Activated T-helper 2 cell treated with anti-CD3 and anti-CD28 coated beads, Interferon-gamma antibody, Interleukin-2, Interleukin-4, amounts not matched to agents 10 μg/mL and 5 μg/mL and 100 μg/mL, durations not matched to agents 14 hours and 24 hours and 36 hours (primary cell): ENCODE measurements at regions of chr2 and their contacts with region 1.

Region 1: DNA sequence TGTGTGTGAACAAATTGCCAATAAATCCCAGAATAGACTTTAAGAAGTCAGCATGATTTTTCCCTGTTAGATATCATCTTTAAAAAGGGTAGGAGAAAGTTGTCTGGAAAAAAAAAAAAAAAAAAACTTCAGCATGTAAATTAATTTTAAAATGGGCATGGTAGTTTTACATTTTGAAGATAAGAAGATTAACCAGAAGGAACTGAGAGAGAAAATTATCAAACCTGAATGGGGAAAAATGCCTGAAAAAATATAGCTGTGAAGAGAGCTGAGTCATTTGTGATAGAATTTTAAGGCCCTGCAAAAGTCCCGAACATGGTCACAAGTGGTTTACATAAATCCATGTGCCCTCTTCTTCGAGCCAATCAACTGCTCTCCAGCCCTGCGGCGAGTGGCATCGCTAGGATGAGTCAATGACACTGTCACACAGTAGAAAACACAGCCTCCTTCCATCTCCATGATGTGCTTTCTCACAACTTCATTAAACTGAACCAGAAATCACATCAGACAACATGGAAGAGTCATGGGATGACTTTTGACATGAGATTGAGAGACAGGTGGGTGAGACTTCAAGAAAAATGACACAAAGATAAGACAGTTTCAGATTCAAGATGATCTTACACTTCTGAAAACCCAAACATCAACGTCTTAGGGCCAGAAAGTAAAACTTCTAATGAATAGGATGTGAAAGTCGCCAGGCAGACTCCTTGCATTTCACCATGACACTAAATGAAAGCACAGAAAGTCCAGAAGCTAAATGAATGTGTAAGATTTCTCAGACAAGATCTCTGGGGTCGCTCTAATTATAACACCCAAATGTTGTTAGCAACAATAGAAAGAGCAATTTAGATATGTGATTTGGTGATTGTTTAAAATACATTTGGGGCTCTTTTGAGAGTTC is 273.0 kb upstream of the ID2 start:
- DNase-seq: peak; percentile 43
- H3K4me3 Mint-ChIP-seq: no peak overlapping the region
- H3K27ac Mint-ChIP-seq: peak overlapping the region; percentile 79
- H3K4me1 Mint-ChIP-seq: peaks cover 36% of the 10 kb centered on the region
- H3K27me3 Mint-ChIP-seq: peaks cover 24% of the 10 kb centered on the region

Region 2: DNA sequence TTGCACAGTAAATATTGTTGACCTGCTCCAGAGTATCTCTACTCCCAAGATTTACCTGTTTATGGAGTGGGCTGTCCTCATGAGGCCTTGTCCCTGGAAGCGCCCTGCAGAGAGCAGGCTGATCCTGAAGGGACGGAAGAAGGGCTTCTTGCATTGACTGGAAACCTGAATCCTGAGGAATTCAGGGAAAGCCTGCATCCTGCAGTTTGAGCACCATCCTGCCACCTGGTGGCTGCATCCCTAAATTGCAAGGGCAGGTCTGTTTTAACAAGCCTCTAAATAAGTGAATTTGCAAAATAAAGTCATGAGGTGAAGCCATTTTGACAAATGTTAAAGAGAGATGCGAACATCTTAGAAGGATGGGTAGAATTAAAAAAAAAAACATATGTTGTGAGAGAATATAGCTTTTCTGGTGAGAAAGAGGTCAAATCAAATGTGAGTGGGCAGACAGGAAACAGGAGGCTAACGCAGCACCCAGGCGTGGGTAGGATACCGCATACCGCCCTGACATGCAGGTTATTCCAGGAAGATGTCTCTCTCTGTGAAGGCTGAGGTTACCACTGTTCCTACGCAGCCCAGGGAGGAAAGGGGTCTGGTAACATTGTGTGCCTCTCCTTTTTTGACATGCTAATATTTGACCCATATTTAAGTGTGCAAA is 736.7 kb before region 1 on chr2:
- intact Hi-C with region 1: loop called (anchors 5 kb)
- DNase-seq: peak; percentile 51
- H3K4me3 Mint-ChIP-seq: peak overlapping the region; percentile 63
- H3K27ac Mint-ChIP-seq: peak overlapping the region; percentile 97
- H3K4me1 Mint-ChIP-seq: peaks cover 60% of the 10 kb centered on the region
- H3K27me3 Mint-ChIP-seq: no peaks in the 10 kb centered on the region

Region 3: GRCh38 chr2:7984693-7985353 is 424.0 kb before region 1 on chr2:
- intact Hi-C with region 1: loop called (anchors 5 kb)
- DNase-seq: no peak
- H3K4me3 Mint-ChIP-seq: no peak overlapping the region
- H3K27ac Mint-ChIP-seq: peak overlapping the region; percentile 89
- H3K4me1 Mint-ChIP-seq: peaks cover 32% of the 10 kb centered on the region
- H3K27me3 Mint-ChIP-seq: no peaks in the 10 kb centered on the region

Region 4: DNA sequence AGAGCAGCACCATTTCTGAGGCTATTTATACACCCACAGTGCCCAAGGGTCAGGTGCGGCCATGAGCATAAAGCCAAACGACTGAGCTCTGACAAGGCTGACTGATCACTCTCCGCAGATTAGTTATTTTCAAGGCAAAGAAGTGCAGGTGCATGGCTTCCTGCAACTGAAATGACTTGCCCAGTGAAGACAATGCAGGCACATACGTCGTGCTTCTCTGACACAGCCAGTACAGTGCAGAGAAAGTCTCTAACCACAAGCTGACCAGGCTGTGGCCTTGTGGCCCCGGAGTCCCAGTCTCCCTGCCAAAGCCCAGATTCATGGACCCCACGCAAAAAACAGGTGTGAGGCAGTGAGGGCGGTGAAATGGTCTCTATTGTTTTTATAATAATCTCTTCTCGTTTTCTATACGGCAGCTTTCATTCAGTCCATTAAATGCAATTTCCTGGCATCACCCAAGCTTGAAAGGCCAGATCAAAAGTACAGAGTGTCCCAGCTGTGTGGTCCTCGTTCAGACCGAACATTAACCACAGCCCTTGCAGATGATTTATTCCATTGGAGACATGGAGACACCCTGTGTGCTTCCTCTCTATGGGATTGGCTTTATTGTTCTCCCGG is 173.9 kb before region 1 on chr2:
- intact Hi-C with region 1: loop called (anchors 1 kb)
- DNase-seq: no peak
- H3K4me3 Mint-ChIP-seq: no peak overlapping the region
- H3K27ac Mint-ChIP-seq: no peak overlapping the region
- H3K4me1 Mint-ChIP-seq: peaks cover 34% of the 10 kb centered on the region
- H3K27me3 Mint-ChIP-seq: peaks cover 4% of the 10 kb centered on the region

Region 5: GRCh38 chr2:8334866-8335325 is 73.9 kb before region 1 on chr2:
- intact Hi-C with region 1: loop called (anchors 2 kb)
- DNase-seq: no peak
- H3K4me3 Mint-ChIP-seq: no peak overlapping the region
- H3K27ac Mint-ChIP-seq: no peak overlapping the region
- H3K4me1 Mint-ChIP-seq: peaks cover 16% of the 10 kb centered on the region
- H3K27me3 Mint-ChIP-seq: peaks cover 24% of the 10 kb centered on the region

Region 6: GRCh38 chr2:8586457-8587051 is 177.7 kb after region 1 on chr2:
- intact Hi-C with region 1: loop called (anchors 2 kb)
- DNase-seq: no peak
- H3K4me3 Mint-ChIP-seq: peak overlapping the region; percentile 26
- H3K27ac Mint-ChIP-seq: peak overlapping the region; percentile 57
- H3K4me1 Mint-ChIP-seq: peaks cover 52% of the 10 kb centered on the region
- H3K27me3 Mint-ChIP-seq: peaks cover 16% of the 10 kb centered on the region